HEK293 (cell line): ENCODE measurements at regions of chr12 and their contacts with region 1.

Region 1: DNA sequence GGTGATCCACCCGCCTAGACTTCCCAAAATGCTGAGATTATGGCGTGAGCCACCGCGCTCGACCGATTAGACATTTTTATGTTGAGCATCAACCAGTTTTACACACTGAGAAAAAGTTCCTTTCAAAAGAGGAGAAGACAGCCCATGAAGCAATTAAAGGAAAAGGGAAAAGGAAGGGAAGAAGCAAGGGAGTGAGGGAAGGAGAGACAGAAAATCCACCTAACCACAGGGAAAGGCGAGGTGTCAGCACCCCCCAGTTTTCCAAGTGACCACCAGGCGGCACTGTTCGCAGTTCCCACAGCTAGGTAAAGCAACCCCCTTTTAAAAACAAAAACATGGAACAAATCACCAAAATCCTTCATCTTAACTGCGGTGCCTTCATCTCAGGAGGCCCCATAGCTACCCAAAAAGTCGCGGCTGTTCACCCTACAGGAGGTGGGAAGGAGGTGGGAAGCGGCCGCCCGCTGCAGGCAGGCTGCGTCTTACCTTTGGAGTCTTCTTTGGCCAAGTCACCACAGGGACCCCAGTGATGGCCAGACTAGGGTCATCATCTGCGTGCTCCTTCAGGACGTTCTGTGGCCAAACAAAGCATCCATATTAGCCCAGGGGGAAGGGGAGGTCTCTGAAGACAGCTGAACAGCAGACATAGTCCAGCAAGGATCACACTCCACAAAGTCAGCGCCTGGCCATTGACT is 86.6 kb downstream of the KDM2B start:
- H3K4me3 ChIP-seq: no peak overlapping the region
- H3K27ac ChIP-seq: no peak overlapping the region
- H3K4me1 ChIP-seq: no peaks in the 10 kb centered on the region
- CTCF ChIP-seq: peak; percentile 39; the same call in 1 of the 2 replicates

Region 2: GRCh38 chr12:121476477-121476876 is 17.8 kb before region 1 on chr12:
- CTCF ChIA-PET with region 1: interaction called, 23 read pairs
- POLR2A ChIA-PET with region 1: no interaction called
- H3K4me3 ChIP-seq: no peak overlapping the region
- H3K27ac ChIP-seq: no peak overlapping the region
- H3K4me1 ChIP-seq: peaks cover 8% of the 10 kb centered on the region
- CTCF ChIP-seq: no peak

Region 3: GRCh38 chr12:121560392-121561008 is 66.3 kb after region 1 on chr12:
- CTCF ChIA-PET with region 1: no interaction called
- POLR2A ChIA-PET with region 1: no interaction called
- H3K4me3 ChIP-seq: no peak overlapping the region
- H3K27ac ChIP-seq: no peak overlapping the region
- H3K4me1 ChIP-seq: no peaks in the 10 kb centered on the region
- CTCF ChIP-seq: no peak

Region 4: GRCh38 chr12:121678716-121679580 is 184.7 kb after region 1 on chr12:
- CTCF ChIA-PET with region 1: interaction called, 21 read pairs
- POLR2A ChIA-PET with region 1: no interaction called
- H3K4me3 ChIP-seq: no peak overlapping the region
- H3K27ac ChIP-seq: no peak overlapping the region
- H3K4me1 ChIP-seq: no peaks in the 10 kb centered on the region
- CTCF ChIP-seq: no peak

Region 5: DNA sequence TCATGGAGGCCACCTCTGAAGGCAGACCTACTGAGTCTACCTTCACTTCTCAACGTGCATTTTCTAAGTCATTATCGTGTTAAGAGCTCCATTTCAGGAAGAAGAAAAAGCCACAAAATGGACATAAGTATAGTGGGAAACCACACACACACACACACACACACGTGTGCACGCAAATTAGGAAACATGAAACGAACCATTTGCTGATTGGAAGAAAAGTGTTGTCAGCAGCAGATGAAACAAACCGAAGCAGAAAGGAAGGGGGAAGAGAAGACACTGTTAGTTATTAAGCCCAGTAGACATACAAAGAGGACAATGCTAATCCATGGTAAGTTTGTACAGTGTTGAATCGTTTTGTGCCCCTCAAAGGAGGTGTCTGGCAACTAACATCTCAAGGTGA is 782.0 kb after region 1 on chr12:
- CTCF ChIA-PET with region 1: interaction called, 10 read pairs
- POLR2A ChIA-PET with region 1: no interaction called
- H3K4me3 ChIP-seq: no peak overlapping the region
- H3K27ac ChIP-seq: no peak overlapping the region
- H3K4me1 ChIP-seq: peaks cover 3% of the 10 kb centered on the region; the same call in 1 of the 2 replicates
- CTCF ChIP-seq: no peak